Activated T-helper 1 cell treated with anti-CD3 and anti-CD28 coated beads, Interleukin-12 subunit alpha, Interleukin-12 subunit beta, Interleukin-2, Interleukin-4 antibody, amounts not matched to agents 30 ng/mL and 10 ng/mL and 1 ng/mL, durations not matched to agents 14 hours and 24 hours and 36 hours (primary cell): ENCODE measurements at regions of chr4 and their contacts with region 1.

Region 1: GRCh38 chr4:113684534-113685091 is 76.9 kb downstream of the CAMK2D start:
- DNase-seq: no peak
- H3K4me3 Mint-ChIP-seq: peak overlapping the region; percentile 58
- H3K27ac Mint-ChIP-seq: peak overlapping the region; percentile 90
- H3K4me1 Mint-ChIP-seq: peaks cover 70% of the 10 kb centered on the region
- H3K27me3 Mint-ChIP-seq: no peaks in the 10 kb centered on the region

Region 2: GRCh38 chr4:113355550-113356371 is 328.9 kb before region 1 on chr4:
- intact Hi-C with region 1: loop called (anchors 1 kb)
- DNase-seq: peak; percentile 71
- H3K4me3 Mint-ChIP-seq: peak overlapping the region; percentile 30
- H3K27ac Mint-ChIP-seq: peak overlapping the region; percentile 79
- H3K4me1 Mint-ChIP-seq: peaks cover 37% of the 10 kb centered on the region
- H3K27me3 Mint-ChIP-seq: peaks cover 25% of the 10 kb centered on the region

Region 3: GRCh38 chr4:113474017-113474416 is 210.6 kb before region 1 on chr4:
- intact Hi-C with region 1: loop called (anchors 1 kb)
- DNase-seq: no peak
- H3K4me3 Mint-ChIP-seq: no peak overlapping the region
- H3K27ac Mint-ChIP-seq: peak overlapping the region; percentile 82
- H3K4me1 Mint-ChIP-seq: peaks cover 39% of the 10 kb centered on the region
- H3K27me3 Mint-ChIP-seq: no peaks in the 10 kb centered on the region

Region 4: DNA sequence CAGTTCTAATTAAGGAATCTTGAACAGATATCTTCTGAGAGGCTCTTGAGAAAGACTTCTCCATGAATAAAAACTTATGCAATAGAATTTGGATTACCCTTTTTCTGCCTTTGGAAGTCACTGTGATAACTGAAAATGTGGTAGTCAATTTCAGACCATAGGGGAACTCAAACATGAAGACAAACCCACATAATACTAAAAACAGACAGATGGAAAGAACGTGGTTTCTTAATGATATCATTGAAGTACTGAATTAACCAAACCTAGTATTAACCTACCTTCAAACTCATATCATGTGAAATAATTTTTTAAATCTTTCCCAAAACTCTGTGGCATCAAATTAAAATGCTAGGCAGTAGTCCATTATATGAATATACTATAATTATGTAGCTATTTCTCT is 76.6 kb before region 1 on chr4:
- intact Hi-C with region 1: loop called (anchors 1 kb)
- DNase-seq: no peak
- H3K4me3 Mint-ChIP-seq: no peak overlapping the region
- H3K27ac Mint-ChIP-seq: peak overlapping the region; percentile 36
- H3K4me1 Mint-ChIP-seq: peaks cover 34% of the 10 kb centered on the region
- H3K27me3 Mint-ChIP-seq: no peaks in the 10 kb centered on the region

Region 5: DNA sequence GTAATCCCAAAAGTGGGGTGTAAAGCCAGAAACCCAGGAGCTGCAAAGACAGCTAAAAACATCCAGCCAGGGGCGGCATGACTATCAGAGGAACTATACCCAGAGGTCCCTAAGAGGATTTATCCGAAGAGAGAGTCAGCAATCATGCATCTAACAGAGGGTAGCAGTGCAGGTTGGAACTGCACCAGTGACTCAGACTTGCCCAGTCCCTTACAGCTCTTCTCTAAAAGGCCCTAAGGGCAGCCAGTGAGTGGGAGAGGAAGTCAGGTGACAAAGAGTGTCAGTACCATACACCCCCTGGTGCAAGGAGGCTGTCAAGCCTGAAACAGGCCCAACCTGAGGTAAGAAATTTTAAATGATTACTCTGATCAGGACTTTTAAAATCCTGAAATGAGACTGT is 11.2 kb before region 1 on chr4:
- intact Hi-C with region 1: loop called (anchors 1 kb)
- DNase-seq: no peak
- H3K4me3 Mint-ChIP-seq: no peak overlapping the region
- H3K27ac Mint-ChIP-seq: peak overlapping the region; percentile 44
- H3K4me1 Mint-ChIP-seq: peaks cover 60% of the 10 kb centered on the region
- H3K27me3 Mint-ChIP-seq: no peaks in the 10 kb centered on the region

Region 6: GRCh38 chr4:113756005-113756410 is 71.4 kb after region 1 on chr4:
- intact Hi-C with region 1: loop called (anchors 1 kb)
- DNase-seq: no peak
- H3K4me3 Mint-ChIP-seq: peak overlapping the region; percentile 100
- H3K27ac Mint-ChIP-seq: peak overlapping the region; percentile 73
- H3K4me1 Mint-ChIP-seq: peaks cover 61% of the 10 kb centered on the region
- H3K27me3 Mint-ChIP-seq: no peaks in the 10 kb centered on the region

Region 7: GRCh38 chr4:113784497-113785250 is 100.1 kb after region 1 on chr4:
- intact Hi-C with region 1: no loop called
- DNase-seq: no peak
- H3K4me3 Mint-ChIP-seq: no peak overlapping the region
- H3K27ac Mint-ChIP-seq: no peak overlapping the region
- H3K4me1 Mint-ChIP-seq: peaks cover 10% of the 10 kb centered on the region
- H3K27me3 Mint-ChIP-seq: no peaks in the 10 kb centered on the region

Region 8: GRCh38 chr4:113869743-113870375 is 185.2 kb after region 1 on chr4:
- intact Hi-C with region 1: loop called (anchors 1 kb)
- DNase-seq: peak; percentile 2
- H3K4me3 Mint-ChIP-seq: peak overlapping the region; percentile 53
- H3K27ac Mint-ChIP-seq: peak overlapping the region; percentile 88
- H3K4me1 Mint-ChIP-seq: peaks cover 16% of the 10 kb centered on the region
- H3K27me3 Mint-ChIP-seq: no peaks in the 10 kb centered on the region